Dorsolateral prefrontal cortex (tissue), 120 donors: ENCODE measurements at regions of chr10 and their contacts with region 1.

Region 1: GRCh38 chr10:78972947-78973900 is 95.5 kb upstream of the ZMIZ1 start:
- DNase-seq: peak; percentile 74 to 89 (median 84)
- H3K4me3 ChIP-seq: peak overlapping the region; percentile 24 to 71 (median 57)
- H3K27ac ChIP-seq: peak overlapping the region; percentile 85 to 99 (median 98)
- H3K27me3 ChIP-seq: no peaks in the 10 kb centered on the region
- CTCF ChIP-seq: peak in 1 of 56 donors; percentile 47

Region 2: DNA sequence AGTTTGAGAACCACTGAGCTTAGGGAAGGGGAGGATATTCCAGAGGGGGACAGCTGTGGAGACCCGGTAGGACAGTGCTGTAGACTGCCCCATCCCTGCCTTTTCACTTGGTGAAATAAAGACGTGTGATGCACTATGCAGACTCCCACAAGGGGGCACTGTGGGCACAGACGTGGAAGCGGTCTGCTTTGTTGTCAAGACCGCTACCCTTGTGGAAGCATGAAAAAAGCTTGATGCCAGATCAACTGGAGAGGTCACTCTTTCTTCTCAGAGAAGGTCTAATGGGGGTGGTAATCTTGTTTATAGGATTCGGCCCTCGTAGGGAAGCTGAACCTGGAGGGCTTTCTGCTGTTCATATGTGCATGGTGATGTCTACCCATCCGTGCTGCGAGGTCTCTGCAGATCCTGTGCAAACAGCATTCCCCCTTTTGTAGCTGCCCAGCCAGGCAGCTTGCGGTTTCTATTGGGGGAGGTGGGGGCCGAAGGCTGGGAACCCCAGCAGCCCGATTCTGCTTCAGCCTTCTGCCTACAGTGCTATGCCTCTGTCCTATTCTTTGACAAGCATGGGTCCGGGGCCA is 925.8 kb before region 1 on chr10:
- intact Hi-C with region 1: loop called (anchors 5 to 10 kb)
- DNase-seq: peak; percentile 88 to 98 (median 92)
- H3K4me3 ChIP-seq: peak overlapping the region in 17 of 59 donors; percentile 10 to 32 (median 22)
- H3K27ac ChIP-seq: peak overlapping the region in 12 of 59 donors; percentile 19 to 66 (median 42)
- H3K27me3 ChIP-seq: no peaks in the 10 kb centered on the region
- CTCF ChIP-seq: peak; percentile 88 to 99 (median 94)

Region 3: DNA sequence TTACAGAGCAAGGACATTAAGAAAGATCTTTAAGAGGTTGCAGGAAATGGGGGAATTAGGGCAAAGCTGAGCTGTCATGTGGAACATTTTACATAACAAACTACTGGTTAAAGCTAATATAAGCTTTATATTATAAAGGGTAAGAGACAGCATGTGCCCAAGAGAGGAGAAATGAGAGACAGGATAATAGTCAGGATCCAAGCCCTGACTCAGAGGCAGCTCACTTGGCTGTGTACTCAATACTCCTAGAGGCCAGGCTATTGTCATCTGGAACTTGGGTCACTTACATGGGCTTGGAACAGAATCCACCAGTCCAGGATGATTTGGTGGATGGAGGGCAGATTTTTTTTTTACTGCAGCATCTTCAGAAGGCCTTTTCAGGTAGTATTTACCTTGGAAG is 323.1 kb before region 1 on chr10:
- intact Hi-C with region 1: loop called in 1 of 2 experiments (anchors 5 kb)
- DNase-seq: no peak
- H3K4me3 ChIP-seq: no peak overlapping the region
- H3K27ac ChIP-seq: no peak overlapping the region
- H3K27me3 ChIP-seq: no peaks in the 10 kb centered on the region
- CTCF ChIP-seq: no peak

Region 4: DNA sequence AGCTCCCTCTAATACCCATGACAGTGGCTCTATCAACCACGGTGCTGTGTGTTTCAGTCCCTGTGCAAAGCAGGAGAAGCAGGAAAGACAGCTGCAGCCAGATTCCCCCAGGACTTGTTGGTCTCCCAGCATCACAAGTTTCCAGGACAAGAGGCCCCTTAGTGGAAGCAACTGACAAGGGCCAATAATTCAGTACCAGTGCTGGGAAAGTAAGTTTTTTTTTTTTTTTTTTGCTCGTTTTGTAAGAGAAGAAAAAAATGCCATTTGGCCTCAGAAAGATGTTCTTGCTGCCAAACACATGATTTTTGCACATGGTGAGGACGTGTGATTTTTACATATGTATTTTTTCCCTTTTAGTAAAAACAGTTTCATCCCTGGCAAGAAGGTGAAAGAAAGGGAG is 188.7 kb before region 1 on chr10:
- intact Hi-C with region 1: loop called (anchors 5 to 10 kb)
- DNase-seq: peak in 1 of 10 donors; percentile 26
- H3K4me3 ChIP-seq: no peak overlapping the region
- H3K27ac ChIP-seq: peak overlapping the region in 14 of 59 donors; percentile 22 to 79 (median 50)
- H3K27me3 ChIP-seq: no peaks in the 10 kb centered on the region
- CTCF ChIP-seq: no peak

Region 5: GRCh38 chr10:78913219-78914059 is 59.8 kb before region 1 on chr10:
- intact Hi-C with region 1: loop called (anchors 1 kb)
- DNase-seq: peak; percentile 54 to 98 (median 94)
- H3K4me3 ChIP-seq: no peak overlapping the region
- H3K27ac ChIP-seq: peak overlapping the region in 51 of 59 donors; percentile 1 to 89 (median 70)
- H3K27me3 ChIP-seq: no peaks in the 10 kb centered on the region
- CTCF ChIP-seq: peak in 23 of 56 donors; percentile 5 to 59 (median 23)

Region 6: DNA sequence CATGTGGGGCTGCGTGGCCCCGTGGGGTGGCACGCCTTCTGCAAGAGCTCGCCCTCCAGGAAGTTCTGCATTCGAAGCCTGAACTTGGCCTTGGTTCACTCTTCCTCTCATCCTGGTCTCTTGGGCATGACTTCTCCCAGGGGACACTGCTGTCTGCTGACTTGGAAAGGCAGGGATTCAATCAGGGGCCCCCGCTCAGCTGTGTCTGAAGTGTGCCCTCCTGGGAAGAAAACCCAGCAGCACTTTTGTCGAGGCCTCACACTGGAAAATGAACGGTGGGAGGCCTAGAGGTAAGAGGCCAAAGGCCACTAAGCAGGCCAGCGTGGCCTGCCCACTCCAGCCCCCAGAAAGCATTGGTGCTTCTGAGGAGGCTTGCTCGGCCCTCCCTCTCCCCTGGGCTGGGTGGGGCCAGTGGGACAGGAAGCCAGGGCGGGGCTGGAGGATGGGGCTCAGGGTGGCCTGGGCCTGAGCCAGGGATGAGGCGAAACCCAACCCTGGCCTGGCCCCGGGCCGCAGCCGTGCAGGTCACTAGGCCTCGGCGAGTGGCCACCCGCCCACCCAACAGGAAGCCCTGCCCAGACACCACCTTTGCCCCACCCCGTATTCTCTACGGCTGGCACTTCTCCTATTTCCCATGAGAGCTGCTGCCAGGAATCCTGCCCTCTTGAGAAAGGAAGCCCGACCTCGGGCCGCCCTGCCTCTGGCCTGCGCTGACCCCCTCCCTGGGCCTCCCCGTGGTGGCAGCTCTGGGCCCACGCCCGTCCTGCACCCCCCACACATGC is 176.6 kb after region 1 on chr10:
- intact Hi-C with region 1: loop called (anchors 2 to 5 kb)
- DNase-seq: no peak
- H3K4me3 ChIP-seq: no peak overlapping the region
- H3K27ac ChIP-seq: peak overlapping the region in 55 of 59 donors; percentile 56 to 91 (median 83)
- H3K27me3 ChIP-seq: no peaks in the 10 kb centered on the region
- CTCF ChIP-seq: no peak